Activated CD8-positive, alpha-beta T cell treated with anti-CD3 and anti-CD28 coated beads, Interleukin-2, amount 10 ng/mL, durations not matched to agents 7 days and 5 days (primary cell): ENCODE measurements at regions of chr15 and their contacts with region 1.

Region 1: GRCh38 chr15:29090617-29091466 is 178.8 kb downstream of the NSMCE3 start:
- DNase-seq: peak; percentile 64
- ATAC-seq: peak; percentile 54
- H3K4me3 Mint-ChIP-seq: peak overlapping the region; percentile 70
- H3K27ac Mint-ChIP-seq: peak overlapping the region; percentile 93
- H3K4me1 Mint-ChIP-seq: peaks cover 37% of the 10 kb centered on the region
- H3K27me3 Mint-ChIP-seq: no peaks in the 10 kb centered on the region

Region 2: DNA sequence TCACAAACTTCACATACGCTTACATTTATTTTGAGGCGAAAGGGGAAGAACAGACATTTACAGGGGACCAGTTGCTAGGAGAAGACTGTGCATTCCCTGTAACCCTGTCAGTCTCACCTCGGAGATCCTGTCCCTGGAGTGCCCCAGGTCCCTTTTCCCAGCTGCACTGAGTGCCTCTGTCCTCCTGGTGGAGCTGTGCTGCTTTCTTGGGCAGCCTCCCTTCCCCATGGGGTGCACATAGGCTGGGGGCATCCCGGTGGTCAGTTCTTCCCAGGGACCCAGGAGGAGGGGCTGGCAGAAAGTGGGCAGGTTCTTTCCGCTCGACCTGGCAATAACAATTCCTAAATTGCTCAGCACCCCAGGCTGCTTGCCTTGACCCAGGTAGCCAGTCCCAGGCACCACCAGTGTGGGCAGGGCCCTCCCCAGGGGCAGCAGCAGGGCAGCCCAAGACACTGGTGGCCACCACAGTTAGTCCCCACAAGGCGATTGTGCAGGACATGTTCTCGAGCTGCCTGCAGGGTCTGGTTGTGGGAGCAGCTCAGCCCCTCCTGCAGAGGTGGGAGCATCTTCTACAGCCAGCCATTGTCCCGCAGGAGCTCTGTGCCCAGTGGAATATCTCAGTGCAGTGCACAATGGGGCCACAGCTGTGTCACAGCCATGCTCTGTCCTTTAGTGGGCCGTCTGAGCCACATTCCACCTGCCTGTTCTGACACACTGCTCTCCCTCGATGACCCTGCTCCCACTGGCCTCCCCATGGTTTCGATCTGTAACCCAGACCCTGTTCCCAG is 168.7 kb before region 1 on chr15:
- CTCF ChIA-PET with region 1: interaction called, 23 read pairs
- POLR2A ChIA-PET with region 1: no interaction called
- DNase-seq: no peak
- ATAC-seq: no peak
- H3K4me3 Mint-ChIP-seq: no peak overlapping the region
- H3K27ac Mint-ChIP-seq: peak overlapping the region; percentile 23
- H3K4me1 Mint-ChIP-seq: peaks cover 58% of the 10 kb centered on the region
- H3K27me3 Mint-ChIP-seq: no peaks in the 10 kb centered on the region

Region 3: GRCh38 chr15:28975766-28976179 is 115.1 kb before region 1 on chr15:
- CTCF ChIA-PET with region 1: interaction called, 42 read pairs
- POLR2A ChIA-PET with region 1: no interaction called
- DNase-seq: peak; percentile 84
- ATAC-seq: peak; percentile 81
- H3K4me3 Mint-ChIP-seq: no peak overlapping the region
- H3K27ac Mint-ChIP-seq: no peak overlapping the region
- H3K4me1 Mint-ChIP-seq: peaks cover 33% of the 10 kb centered on the region
- H3K27me3 Mint-ChIP-seq: no peaks in the 10 kb centered on the region

Region 4: GRCh38 chr15:28994831-28995596 is 95.8 kb before region 1 on chr15:
- CTCF ChIA-PET with region 1: interaction called, 19 read pairs
- POLR2A ChIA-PET with region 1: no interaction called
- DNase-seq: no peak
- ATAC-seq: no peak
- H3K4me3 Mint-ChIP-seq: no peak overlapping the region
- H3K27ac Mint-ChIP-seq: peak overlapping the region; percentile 47
- H3K4me1 Mint-ChIP-seq: peaks cover 22% of the 10 kb centered on the region
- H3K27me3 Mint-ChIP-seq: no peaks in the 10 kb centered on the region

Region 5: GRCh38 chr15:29070449-29071231 is 20.2 kb before region 1 on chr15:
- CTCF ChIA-PET with region 1: interaction called, 11 read pairs
- POLR2A ChIA-PET with region 1: no interaction called
- DNase-seq: no peak
- ATAC-seq: no peak
- H3K4me3 Mint-ChIP-seq: no peak overlapping the region
- H3K27ac Mint-ChIP-seq: no peak overlapping the region
- H3K4me1 Mint-ChIP-seq: peaks cover 8% of the 10 kb centered on the region
- H3K27me3 Mint-ChIP-seq: no peaks in the 10 kb centered on the region

Region 6: GRCh38 chr15:29170521-29170920 is 79.7 kb after region 1 on chr15:
- CTCF ChIA-PET with region 1: no interaction called
- POLR2A ChIA-PET with region 1: no interaction called
- DNase-seq: no peak
- ATAC-seq: no peak
- H3K4me3 Mint-ChIP-seq: no peak overlapping the region
- H3K27ac Mint-ChIP-seq: no peak overlapping the region
- H3K4me1 Mint-ChIP-seq: no peaks in the 10 kb centered on the region
- H3K27me3 Mint-ChIP-seq: peaks cover 34% of the 10 kb centered on the region